Naive thymus-derived CD4-positive, alpha-beta T cell (primary cell): ENCODE measurements at regions of chrX and their contacts with region 1.

Region 1: DNA sequence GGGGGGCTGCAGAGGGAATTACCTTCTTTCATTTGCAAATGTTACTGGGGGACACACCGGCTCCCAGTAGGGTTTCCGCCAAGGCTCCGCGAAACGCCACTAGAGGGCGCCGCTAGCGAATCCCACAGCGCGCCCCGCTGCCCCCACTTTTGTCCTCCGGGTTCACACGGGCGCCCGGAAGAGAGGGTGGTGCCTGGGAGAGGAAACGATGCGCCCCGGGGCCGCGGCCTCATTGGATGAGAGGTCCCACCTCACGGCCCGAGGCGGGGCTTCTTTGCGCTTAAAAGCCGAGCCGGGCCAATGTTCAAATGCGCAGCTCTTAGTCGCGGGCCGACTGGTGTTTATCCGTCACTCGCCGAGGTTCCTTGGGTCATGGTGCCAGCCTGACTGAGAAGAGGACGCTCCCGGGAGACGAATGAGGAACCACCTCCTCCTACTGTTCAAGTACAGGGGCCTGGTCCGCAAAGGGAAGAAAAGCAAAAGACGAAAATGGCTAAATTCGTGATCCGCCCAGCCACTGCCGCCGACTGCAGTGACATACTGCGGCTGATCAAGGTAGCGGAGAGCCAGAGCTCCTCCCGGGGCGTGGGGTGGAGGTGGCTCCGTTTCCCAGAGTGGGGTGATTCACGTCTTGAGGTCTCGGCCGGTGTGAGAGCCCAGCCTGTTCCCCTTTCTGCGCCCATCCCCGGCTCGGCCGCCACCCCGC is at the start of gene SAT1:
- DNase-seq: peak; percentile 84 to 94 (median 91)
- ATAC-seq: peak; percentile 89
- H3K4me3 ChIP-seq: peak within 1 kb of the TSS; percentile 91
- H3K4me3 Mint-ChIP-seq: peak within 1 kb of the TSS; percentile 84 to 98 (median 95)
- H3K27ac ChIP-seq: peak within 1 kb of the TSS; percentile 88
- H3K27ac Mint-ChIP-seq: peak within 1 kb of the TSS; percentile 96 to 99 (median 97)
- H3K4me1 ChIP-seq: peaks cover 13 to 17% of the 10 kb centered on the region in 2 donors
- H3K4me1 Mint-ChIP-seq: peaks cover 14 to 41% (median 35%) of the 10 kb centered on the region in 7 donors
- H3K27me3 ChIP-seq: no peaks in the 10 kb centered on the region
- H3K27me3 Mint-ChIP-seq: no peaks in the 10 kb centered on the region
- total RNA-seq, gene SAT1: 68.4 to 1,059 (median 127) TPM

Region 2: GRCh38 chrX:21940356-21940829 is 1842.6 kb before region 1 on chrX and contains the start of gene SMS:
- CTCF ChIA-PET with region 1: no interaction called
- POLR2A ChIA-PET with region 1: no interaction called
- intact Hi-C with region 1: loop called in 1 of 2 experiments (anchors 10 kb)
- DNase-seq: peak; percentile 8 to 64 (median 16)
- ATAC-seq: peak; percentile 77
- H3K4me3 ChIP-seq: peak within 1 kb of the TSS; percentile 46
- H3K4me3 Mint-ChIP-seq: peak within 1 kb of the TSS; percentile 78 to 90 (median 84)
- H3K27ac ChIP-seq: peak within 1 kb of the TSS; percentile 62
- H3K27ac Mint-ChIP-seq: peak within 1 kb of the TSS; percentile 60 to 90 (median 80)
- H3K4me1 ChIP-seq: peaks cover 0 to 5% of the 10 kb centered on the region in 2 donors
- H3K4me1 Mint-ChIP-seq: peaks cover 8 to 22% (median 19%) of the 10 kb centered on the region in 7 donors
- H3K27me3 ChIP-seq: no peaks in the 10 kb centered on the region
- H3K27me3 Mint-ChIP-seq: no peaks in the 10 kb centered on the region
- total RNA-seq, gene SMS: 14.7 to 57.4 (median 20.4) TPM

Region 3: DNA sequence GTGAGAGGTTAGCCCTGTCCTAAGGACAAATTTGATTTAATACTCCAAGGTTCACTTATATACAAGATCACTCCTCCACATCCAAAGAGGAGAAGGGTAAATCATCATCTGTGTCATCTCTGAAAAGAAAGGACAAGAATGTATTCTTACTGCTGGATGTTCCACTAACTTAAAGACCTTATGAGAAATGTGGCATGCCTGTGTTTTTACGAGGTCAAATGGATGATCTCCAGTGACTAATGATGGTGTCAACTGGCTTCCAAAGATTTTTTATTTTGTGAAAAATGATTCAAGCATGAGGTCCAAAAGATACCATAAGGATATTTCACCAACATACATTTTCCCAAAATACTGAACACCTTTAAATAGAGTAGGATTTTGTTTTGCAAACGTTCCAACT is 305.0 kb before region 1 on chrX:
- CTCF ChIA-PET with region 1: no interaction called
- POLR2A ChIA-PET with region 1: no interaction called
- intact Hi-C with region 1: no loop called
- DNase-seq: no peak
- ATAC-seq: no peak
- H3K4me3 ChIP-seq: no peak overlapping the region
- H3K4me3 Mint-ChIP-seq: no peak overlapping the region
- H3K27ac ChIP-seq: no peak overlapping the region
- H3K27ac Mint-ChIP-seq: no peak overlapping the region
- H3K4me1 ChIP-seq: no peaks in the 10 kb centered on the region
- H3K4me1 Mint-ChIP-seq: no peaks in the 10 kb centered on the region
- H3K27me3 ChIP-seq: no peaks in the 10 kb centered on the region
- H3K27me3 Mint-ChIP-seq: peaks cover 0 to 9% (median 5%) of the 10 kb centered on the region in 5 donors

Region 4: DNA sequence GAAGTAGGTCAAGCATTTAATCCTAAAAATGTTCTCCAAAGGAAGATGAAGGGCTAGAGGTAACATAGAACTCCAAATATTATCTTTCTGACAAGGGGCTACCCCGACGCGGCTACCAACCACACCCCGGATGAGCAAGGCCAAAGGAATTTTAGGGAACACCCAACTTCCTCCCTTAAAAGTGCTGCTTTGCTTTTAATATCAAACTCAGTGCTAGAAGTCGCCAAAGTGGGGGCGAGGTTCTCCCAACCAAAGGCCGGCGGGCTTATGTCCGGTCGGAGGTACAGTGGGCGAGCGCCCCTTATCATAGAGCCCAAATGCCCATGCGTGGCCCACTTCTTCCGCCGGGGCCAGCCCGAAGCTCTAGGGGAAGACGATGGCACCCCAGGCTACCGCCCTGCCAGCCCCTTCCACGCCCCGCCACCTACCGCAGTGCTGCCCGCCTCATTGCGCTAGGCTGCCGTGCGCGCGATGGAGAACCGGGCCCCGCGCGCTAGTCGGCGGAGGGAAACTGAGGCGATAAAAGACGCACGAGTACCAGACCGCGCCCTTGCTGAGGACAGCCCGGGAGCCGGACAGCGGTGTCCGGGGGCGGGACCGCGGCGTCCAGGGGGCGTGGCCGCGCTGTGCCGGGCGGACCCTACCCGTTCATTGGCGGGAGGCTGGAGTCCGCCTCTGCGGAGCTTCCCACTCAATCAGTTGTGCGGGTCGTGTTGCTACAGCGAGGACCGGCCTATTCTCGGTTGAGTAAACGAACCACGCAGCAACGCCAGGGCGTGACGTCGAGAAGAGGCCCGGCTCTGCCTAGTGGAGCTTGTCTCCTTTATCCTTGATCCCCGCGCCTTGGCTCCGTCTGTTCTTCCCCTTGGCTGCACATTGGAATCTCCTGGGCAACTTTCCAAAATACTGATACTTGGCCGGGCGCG is 40.1 kb before region 1 on chrX and contains the start of gene ACOT9:
- CTCF ChIA-PET with region 1: interaction called, 5 read pairs
- POLR2A ChIA-PET with region 1: interaction called, 5 read pairs
- intact Hi-C with region 1: loop called (anchors 1 to 2 kb)
- DNase-seq: peak; percentile 26 to 84 (median 49)
- ATAC-seq: peak; percentile 97
- H3K4me3 ChIP-seq: peak within 1 kb of the TSS; percentile 75
- H3K4me3 Mint-ChIP-seq: peak within 1 kb of the TSS; percentile 77 to 91 (median 86)
- H3K27ac ChIP-seq: peak within 1 kb of the TSS; percentile 49
- H3K27ac Mint-ChIP-seq: peak within 1 kb of the TSS; percentile 69 to 90 (median 75)
- H3K4me1 ChIP-seq: peaks cover 0 to 14% of the 10 kb centered on the region in 2 donors
- H3K4me1 Mint-ChIP-seq: peaks cover 13 to 36% (median 18%) of the 10 kb centered on the region in 7 donors
- H3K27me3 ChIP-seq: no peaks in the 10 kb centered on the region
- H3K27me3 Mint-ChIP-seq: no peaks in the 10 kb centered on the region
- total RNA-seq, gene ACOT9: 8.2 to 40.1 (median 9.1) TPM

Region 5: GRCh38 chrX:23907498-23908218 is 124.6 kb after region 1 on chrX and contains the starts of genes APOO and CXorf58:
- CTCF ChIA-PET with region 1: interaction called, 15 read pairs
- POLR2A ChIA-PET with region 1: interaction called, 19 read pairs
- intact Hi-C with region 1: loop called (anchors 1 kb)
- DNase-seq: peak; percentile 80 to 94 (median 91)
- ATAC-seq: peak; percentile 95
- H3K4me3 ChIP-seq: peak within 1 kb of the TSS; percentile 62
- H3K4me3 Mint-ChIP-seq: peak within 1 kb of the TSS; percentile 79 to 88 (median 83)
- H3K27ac ChIP-seq: peak within 1 kb of the TSS; percentile 88
- H3K27ac Mint-ChIP-seq: peak within 1 kb of the TSS; percentile 85 to 94 (median 90)
- H3K4me1 ChIP-seq: peaks cover 10 to 16% of the 10 kb centered on the region in 2 donors
- H3K4me1 Mint-ChIP-seq: peaks cover 0 to 17% (median 8%) of the 10 kb centered on the region in 7 donors
- H3K27me3 ChIP-seq: no peaks in the 10 kb centered on the region
- H3K27me3 Mint-ChIP-seq: no peaks in the 10 kb centered on the region
- total RNA-seq, gene APOO: 5.4 to 19.2 (median 7.5) TPM
- total RNA-seq, gene CXorf58: not detected

Region 6: DNA sequence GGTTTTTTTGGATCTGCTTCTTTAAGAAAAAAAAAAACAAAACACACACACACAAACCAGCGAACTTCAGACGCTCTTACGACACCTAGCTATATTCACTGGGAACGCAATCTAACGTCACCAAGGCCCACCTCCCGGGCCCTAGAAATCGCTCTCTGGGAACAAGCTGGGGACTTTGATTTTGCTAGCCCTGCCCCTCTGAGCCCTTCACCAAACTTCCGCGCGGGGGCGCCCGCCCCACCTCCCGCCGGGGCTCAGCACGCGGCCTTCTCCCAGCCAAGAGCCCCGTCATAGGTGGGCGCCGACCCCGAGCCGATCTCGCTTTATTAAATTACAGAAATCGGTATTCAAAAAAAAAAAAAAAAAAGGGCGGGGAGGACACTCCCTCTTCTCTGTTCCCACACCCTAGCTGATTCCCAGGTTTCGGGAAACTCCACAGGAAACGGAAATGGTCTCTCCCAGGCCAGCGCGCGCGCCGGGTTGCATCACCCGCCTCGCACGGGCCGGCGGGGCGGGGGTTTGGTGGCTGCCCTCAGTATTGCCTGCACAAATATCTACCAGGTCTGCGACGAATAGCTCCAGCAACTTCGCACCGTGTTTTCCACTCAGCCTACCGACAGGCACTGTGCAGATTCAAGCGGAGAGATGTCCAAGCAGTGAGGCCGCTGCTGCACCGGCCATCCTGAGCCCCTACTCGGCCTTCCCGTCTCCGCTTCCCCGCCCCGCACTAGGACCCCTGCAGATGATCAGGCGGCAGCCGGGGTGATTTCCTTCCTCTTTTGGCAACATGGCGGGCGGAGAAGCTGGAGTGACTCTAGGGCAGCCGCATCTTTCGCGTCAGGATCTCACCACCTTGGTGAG is 271.4 kb after region 1 on chrX and contains the start of gene EIF2S3:
- CTCF ChIA-PET with region 1: interaction called, 5 read pairs
- POLR2A ChIA-PET with region 1: interaction called, 18 read pairs
- intact Hi-C with region 1: loop called (anchors 1 kb)
- DNase-seq: peak; percentile 75 to 97 (median 93)
- ATAC-seq: peak; percentile 90
- H3K4me3 ChIP-seq: peak within 1 kb of the TSS; percentile 68
- H3K4me3 Mint-ChIP-seq: peak within 1 kb of the TSS in 2 of 10 donors; percentile 96 to 99
- H3K27ac ChIP-seq: no peak within 1 kb of the TSS
- H3K27ac Mint-ChIP-seq: peak within 1 kb of the TSS in 5 of 9 donors; percentile 97 to 100 (median 99)
- H3K4me1 ChIP-seq: peaks cover 0 to 6% of the 10 kb centered on the region in 2 donors
- H3K4me1 Mint-ChIP-seq: peaks cover 0 to 25% (median 4%) of the 10 kb centered on the region in 7 donors
- H3K27me3 ChIP-seq: no peaks in the 10 kb centered on the region
- H3K27me3 Mint-ChIP-seq: no peaks in the 10 kb centered on the region
- total RNA-seq, gene EIF2S3: 174 to 270 (median 226) TPM

Region 7: GRCh38 chrX:24479924-24480323 is 696.9 kb after region 1 on chrX:
- CTCF ChIA-PET with region 1: no interaction called
- POLR2A ChIA-PET with region 1: no interaction called
- intact Hi-C with region 1: loop called in 1 of 2 experiments (anchors 5 kb)
- DNase-seq: peak in 8 of 9 donors; percentile 46 to 88 (median 82)
- ATAC-seq: peak; percentile 98
- H3K4me3 ChIP-seq: peak overlapping the region; percentile 34
- H3K4me3 Mint-ChIP-seq: peak overlapping the region; percentile 65 to 85 (median 76)
- H3K27ac ChIP-seq: peak overlapping the region; percentile 81
- H3K27ac Mint-ChIP-seq: peak overlapping the region; percentile 91 to 97 (median 95)
- H3K4me1 ChIP-seq: peaks cover 22 to 51% of the 10 kb centered on the region in 2 donors
- H3K4me1 Mint-ChIP-seq: peaks cover 16 to 92% (median 71%) of the 10 kb centered on the region in 7 donors
- H3K27me3 ChIP-seq: no peaks in the 10 kb centered on the region
- H3K27me3 Mint-ChIP-seq: no peaks in the 10 kb centered on the region

Region 8: DNA sequence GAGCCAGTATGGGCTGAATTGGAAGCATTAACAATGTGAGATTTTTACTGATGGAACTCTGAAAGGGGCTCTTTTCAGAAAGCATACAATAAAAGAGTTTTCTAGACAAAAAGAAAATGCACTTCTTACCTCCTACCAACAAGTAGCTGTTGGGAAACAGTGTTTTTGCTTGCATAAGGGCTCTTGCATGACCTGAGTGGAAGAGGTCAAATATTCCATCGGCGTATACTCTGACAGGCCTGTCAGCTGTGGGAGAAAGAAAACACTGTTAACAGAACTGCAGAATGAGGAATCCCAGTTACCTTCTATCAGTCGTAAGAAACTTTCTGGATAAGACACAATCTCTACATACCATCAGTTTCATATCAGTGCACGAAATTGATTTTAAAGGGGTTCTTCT is 824.6 kb after region 1 on chrX:
- CTCF ChIA-PET with region 1: no interaction called
- POLR2A ChIA-PET with region 1: no interaction called
- intact Hi-C with region 1: no loop called
- DNase-seq: no peak
- ATAC-seq: no peak
- H3K4me3 ChIP-seq: no peak overlapping the region
- H3K4me3 Mint-ChIP-seq: no peak overlapping the region
- H3K27ac ChIP-seq: no peak overlapping the region
- H3K27ac Mint-ChIP-seq: no peak overlapping the region
- H3K4me1 ChIP-seq: no peaks in the 10 kb centered on the region
- H3K4me1 Mint-ChIP-seq: no peaks in the 10 kb centered on the region
- H3K27me3 ChIP-seq: no peaks in the 10 kb centered on the region
- H3K27me3 Mint-ChIP-seq: peaks cover 0 to 8% (median 0%) of the 10 kb centered on the region in 5 donors